ENCODE measurements at regions of chr6 and their contacts with region 1.

Region 1: GRCh38 chr6:144104898-144105487 is 9.6 kb upstream of the SF3B5 start:
- DNase-seq: peak; percentile 44
- H3K4me3 ChIP-seq: peak overlapping the region in 1 of 2 experiments; percentile 40; a peak in 1 of 4 replicates
- H3K27ac ChIP-seq: no peak overlapping the region
- H3K4me1 ChIP-seq: no peaks in the 10 kb centered on the region
- H3K27me3 ChIP-seq: no peaks in the 10 kb centered on the region; the same call in 1 of the 2 replicates
- CTCF ChIP-seq: peak; percentile 75
- EP300 ChIP-seq: no peak
- RAD21 ChIP-seq: peak; percentile 87

Region 2: GRCh38 chr6:144055121-144055931 is 49.7 kb before region 1 on chr6:
- CTCF ChIA-PET with region 1: no interaction called
- POLR2A ChIA-PET with region 1: no interaction called
- DNase-seq: no peak
- H3K4me3 ChIP-seq: no peak overlapping the region
- H3K27ac ChIP-seq: no peak overlapping the region
- H3K4me1 ChIP-seq: no peaks in the 10 kb centered on the region
- H3K27me3 ChIP-seq: no peaks in the 10 kb centered on the region
- CTCF ChIP-seq: no peak
- EP300 ChIP-seq: no peak
- RAD21 ChIP-seq: no peak

Region 3: GRCh38 chr6:144215932-144216667 is 111.1 kb after region 1 on chr6:
- CTCF ChIA-PET with region 1: interaction called, 17 read pairs
- POLR2A ChIA-PET with region 1: no interaction called
- DNase-seq: peak; percentile 89
- H3K4me3 ChIP-seq: peak overlapping the region; percentile 71 to 74
- H3K27ac ChIP-seq: peak overlapping the region; percentile 86
- H3K4me1 ChIP-seq: peaks cover 0 to 12% of the 10 kb centered on the region in 2 experiments; a peak in 1 of 4 replicates
- H3K27me3 ChIP-seq: no peaks in the 10 kb centered on the region
- CTCF ChIP-seq: peak; percentile 55
- EP300 ChIP-seq: no peak
- RAD21 ChIP-seq: peak; percentile 45; the same call in 1 of the 2 replicates

Measured in SK-N-SH (cell line).